ENCODE measurements at regions of chr19 and their contacts with region 1.

Region 1: GRCh38 chr19:44570984-44571684 is 41.7 kb upstream of the CEACAM20 start:
- DNase-seq: peak; percentile 57
- H3K4me3 Mint-ChIP-seq: no peak overlapping the region
- H3K27ac Mint-ChIP-seq: no peak overlapping the region
- H3K4me1 Mint-ChIP-seq: no peaks in the 10 kb centered on the region
- H3K27me3 Mint-ChIP-seq: peaks cover 13% of the 10 kb centered on the region

Region 2: GRCh38 chr19:44582581-44583265 is 11.6 kb after region 1 on chr19:
- CTCF ChIA-PET with region 1: interaction called, 16 read pairs
- POLR2A ChIA-PET with region 1: no interaction called
- intact Hi-C with region 1: no loop called
- DNase-seq: peak; percentile 46
- H3K4me3 Mint-ChIP-seq: no peak overlapping the region
- H3K27ac Mint-ChIP-seq: no peak overlapping the region
- H3K4me1 Mint-ChIP-seq: peaks cover 4% of the 10 kb centered on the region
- H3K27me3 Mint-ChIP-seq: peaks cover 3% of the 10 kb centered on the region